A549 (cell line): ENCODE measurements at regions of chr2 and their contacts with region 1.

Region 1: DNA sequence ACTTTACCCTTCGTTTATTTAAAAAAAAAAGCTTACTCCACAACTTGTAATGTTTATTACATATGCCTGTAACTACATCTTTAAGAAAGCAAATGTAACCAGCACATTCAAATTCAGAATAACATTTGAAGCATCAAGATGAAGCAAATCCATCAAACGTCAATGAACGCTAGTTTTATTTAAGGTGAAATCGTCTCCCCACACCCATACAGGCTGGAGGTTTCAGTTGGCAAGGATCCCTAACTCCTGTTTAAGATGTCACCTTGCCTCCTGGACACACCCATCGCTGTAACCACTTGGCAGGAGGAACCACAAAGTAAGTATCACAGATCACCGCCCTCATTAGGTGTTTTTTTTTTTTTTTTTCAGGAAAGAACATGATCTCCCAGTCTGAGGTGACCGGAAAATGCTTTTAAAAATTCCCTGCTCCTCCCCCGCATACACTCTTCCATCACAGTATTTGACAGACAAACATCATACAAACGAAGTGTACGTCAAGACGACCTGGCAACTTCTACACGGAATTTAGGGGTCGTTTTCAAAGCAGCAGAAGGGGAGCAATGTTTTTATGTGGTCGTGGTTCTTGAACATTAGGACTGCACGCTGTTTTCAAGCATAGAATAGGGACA is 19.7 kb upstream of the STPG4 start:
- DNase-seq: peak; percentile 82 to 87
- ATAC-seq: peak; percentile 42 to 48; a peak in 5 of 6 replicates
- H3K4me3 ChIP-seq: peak overlapping the region; percentile 97
- H3K27ac ChIP-seq: peak overlapping the region; percentile 94 to 99
- H3K4me1 ChIP-seq: peaks cover 52% of the 10 kb centered on the region
- CTCF ChIP-seq: no peak
- EP300 ChIP-seq: no peak
- POLR2A ChIP-seq: no peak
- RAD21 ChIP-seq: no peak

Region 2: DNA sequence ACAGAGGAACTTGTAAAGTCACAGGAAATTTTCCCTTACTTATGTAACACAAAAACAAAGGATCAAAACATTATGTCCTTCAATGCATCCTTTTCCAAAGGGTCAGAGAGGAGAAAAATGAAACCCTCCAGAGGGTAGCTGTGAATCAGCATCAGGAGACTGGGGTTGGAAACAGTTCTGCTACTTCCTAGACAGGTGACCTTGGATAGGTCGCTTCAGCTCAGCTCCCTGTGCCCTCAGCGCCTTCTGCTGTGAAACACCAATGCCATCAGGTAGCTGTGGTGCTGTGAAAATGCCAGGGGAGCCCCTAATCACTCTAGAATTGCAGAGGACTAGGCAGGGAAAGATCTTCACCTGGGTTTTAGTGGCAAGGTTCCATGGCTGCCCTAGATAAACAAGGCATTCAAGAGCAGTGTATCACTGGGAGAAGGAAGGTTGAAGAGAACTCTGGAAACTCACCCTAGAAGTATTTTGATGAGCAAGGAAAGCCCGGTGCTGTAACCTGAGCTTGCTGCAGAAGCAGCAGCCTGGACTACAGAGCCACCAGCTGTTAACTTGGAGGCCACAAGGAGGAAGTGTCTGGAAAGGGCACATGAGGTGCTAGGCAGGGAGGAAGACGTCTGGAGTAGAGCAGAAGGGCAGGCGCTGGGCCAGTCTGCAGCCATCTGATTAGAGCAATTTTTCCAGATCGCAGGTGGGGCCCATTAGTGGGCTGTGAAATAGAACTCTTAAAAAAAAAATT is 158.5 kb before region 1 on chr2:
- CTCF ChIA-PET with region 1: interaction called, 11 read pairs
- POLR2A ChIA-PET with region 1: interaction called, 8 read pairs
- DNase-seq: peak; percentile 82 to 84
- ATAC-seq: peak; percentile 79 to 81
- H3K4me3 ChIP-seq: no peak overlapping the region
- H3K27ac ChIP-seq: peak overlapping the region; percentile 18 to 78
- H3K4me1 ChIP-seq: peaks cover 29% of the 10 kb centered on the region
- CTCF ChIP-seq: no peak
- EP300 ChIP-seq: no peak
- POLR2A ChIP-seq: no peak
- RAD21 ChIP-seq: peak; percentile 31 to 50; a peak in 3 of 5 replicates

Region 3: GRCh38 chr2:47076586-47077441 is 98.0 kb before region 1 on chr2:
- CTCF ChIA-PET with region 1: no interaction called
- POLR2A ChIA-PET with region 1: interaction called, 15 read pairs
- DNase-seq: peak; percentile 99 to 100
- ATAC-seq: peak; percentile 81 to 87
- H3K4me3 ChIP-seq: no peak overlapping the region
- H3K27ac ChIP-seq: peak overlapping the region; percentile 90 to 98
- H3K4me1 ChIP-seq: peaks cover 69% of the 10 kb centered on the region
- CTCF ChIP-seq: no peak
- EP300 ChIP-seq: peak; percentile 94 to 97; a peak in 4 of 5 replicates
- POLR2A ChIP-seq: no peak
- RAD21 ChIP-seq: peak; percentile 42 to 69

Region 4: GRCh38 chr2:47309952-47310800 is 135.3 kb after region 1 on chr2:
- CTCF ChIA-PET with region 1: interaction called, 12 read pairs
- POLR2A ChIA-PET with region 1: interaction called, 5 read pairs
- DNase-seq: peak in 1 of 2 experiments; percentile 90
- ATAC-seq: peak; percentile 63 to 66
- H3K4me3 ChIP-seq: no peak overlapping the region
- H3K27ac ChIP-seq: peak overlapping the region; percentile 78 to 83
- H3K4me1 ChIP-seq: peaks cover 73% of the 10 kb centered on the region
- CTCF ChIP-seq: no peak
- EP300 ChIP-seq: peak in 1 of 2 experiments; percentile 30; a peak in 1 of 5 replicates
- POLR2A ChIP-seq: no peak
- RAD21 ChIP-seq: 0 out of 5 replicates have a peak, but pooled peaks of 1 of the 2 experiments have one; percentile 23